GM10248 (cell line): ENCODE measurements at regions of chr10 and their contacts with region 1.

Region 1: GRCh38 chr10:12902135-12902572 is 99.4 kb downstream of the CCDC3 start:
- DNase-seq: peak; percentile 77
- CTCF ChIP-seq: peak; percentile 61

Region 2: GRCh38 chr10:12888470-12888869 is 13.7 kb before region 1 on chr10:
- CTCF ChIA-PET with region 1: interaction called, 23 read pairs
- POLR2A ChIA-PET with region 1: no interaction called
- DNase-seq: no peak
- CTCF ChIP-seq: no peak

Region 3: DNA sequence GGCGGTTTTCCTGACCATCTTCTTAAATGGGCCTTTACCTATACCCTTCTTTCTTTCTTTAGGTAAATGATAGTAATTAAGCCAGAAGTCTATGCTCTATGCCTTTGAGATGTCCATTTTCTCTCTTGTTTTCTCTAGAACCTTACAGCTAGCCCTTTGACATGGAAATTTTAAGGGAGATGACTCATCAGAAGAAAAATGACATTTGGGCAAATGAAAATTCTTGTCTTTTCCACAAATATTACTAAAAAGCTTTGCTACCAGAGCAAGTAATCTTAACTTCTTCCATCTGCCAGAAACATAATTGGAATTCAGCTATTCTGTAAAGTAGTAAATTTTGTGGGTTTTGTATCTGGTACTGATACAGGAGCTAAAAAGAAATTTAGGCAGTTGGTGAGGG is 39.8 kb after region 1 on chr10:
- CTCF ChIA-PET with region 1: interaction called, 12 read pairs
- POLR2A ChIA-PET with region 1: no interaction called
- DNase-seq: no peak
- CTCF ChIP-seq: no peak